Aorta (tissue), 5 donors: ENCODE measurements at regions of chr11 and their contacts with region 1.

Region 1: DNA sequence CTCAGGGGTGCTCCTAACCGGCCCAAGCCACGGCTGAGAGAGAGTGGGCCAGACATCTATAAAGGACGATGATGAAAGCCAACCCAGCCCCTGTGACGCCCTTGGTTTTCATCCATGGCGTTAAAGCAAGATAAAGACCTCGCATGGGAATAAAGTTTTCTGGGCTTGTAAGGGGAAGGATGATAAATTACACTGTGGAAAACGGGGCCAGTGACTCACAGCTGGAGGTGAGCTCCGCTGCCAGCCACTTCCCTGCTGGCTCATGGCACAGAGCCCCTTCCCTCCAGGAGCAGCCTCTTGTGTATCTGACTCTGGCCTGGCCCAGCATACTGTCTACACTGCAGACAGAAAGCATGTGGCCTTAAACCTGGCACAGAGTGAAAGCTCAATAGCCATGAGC is 503.2 kb upstream of the B3GAT1 start:
- DNase-seq: peak in 1 of 2 donors; percentile 83
- ATAC-seq: peak; percentile 84
- H3K4me3 ChIP-seq: no peak overlapping the region
- H3K27ac ChIP-seq: peak overlapping the region in 1 of 2 donors; percentile 33
- H3K4me1 ChIP-seq: no peaks in the 10 kb centered on the region
- H3K27me3 ChIP-seq: no peaks in the 10 kb centered on the region

Region 2: DNA sequence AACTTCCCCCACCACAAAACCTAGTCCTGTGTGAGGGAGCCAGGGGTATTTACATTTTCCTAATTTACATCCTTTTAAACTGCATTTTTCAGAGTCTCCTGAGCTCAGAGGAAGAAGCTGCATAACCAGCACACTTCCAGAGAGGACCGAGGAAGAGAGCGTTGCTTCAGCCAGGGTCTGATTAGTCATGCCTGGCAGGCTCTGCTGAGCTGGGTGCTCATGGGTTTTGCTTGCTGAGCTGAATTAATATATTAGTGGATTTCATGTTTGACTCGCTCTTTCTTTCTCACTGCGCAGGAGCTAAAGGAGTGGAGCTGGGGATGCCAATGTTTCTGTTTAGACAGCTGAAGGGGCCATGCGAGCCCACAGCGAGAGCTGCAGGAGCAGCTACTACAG is 36.1 kb after region 1 on chr11:
- intact Hi-C with region 1: loop called in 1 of 2 experiments (anchors 5 kb)
- DNase-seq: peak; percentile 81 to 83
- ATAC-seq: peak; percentile 81
- H3K4me3 ChIP-seq: peak overlapping the region in 1 of 2 donors; percentile 19
- H3K27ac ChIP-seq: peak overlapping the region; percentile 61 to 80
- H3K4me1 ChIP-seq: peaks cover 2 to 11% of the 10 kb centered on the region in 2 donors
- H3K27me3 ChIP-seq: no peaks in the 10 kb centered on the region